WTC11 (cell line): ENCODE measurements at regions of chr3 and their contacts with region 1.

Region 1: DNA sequence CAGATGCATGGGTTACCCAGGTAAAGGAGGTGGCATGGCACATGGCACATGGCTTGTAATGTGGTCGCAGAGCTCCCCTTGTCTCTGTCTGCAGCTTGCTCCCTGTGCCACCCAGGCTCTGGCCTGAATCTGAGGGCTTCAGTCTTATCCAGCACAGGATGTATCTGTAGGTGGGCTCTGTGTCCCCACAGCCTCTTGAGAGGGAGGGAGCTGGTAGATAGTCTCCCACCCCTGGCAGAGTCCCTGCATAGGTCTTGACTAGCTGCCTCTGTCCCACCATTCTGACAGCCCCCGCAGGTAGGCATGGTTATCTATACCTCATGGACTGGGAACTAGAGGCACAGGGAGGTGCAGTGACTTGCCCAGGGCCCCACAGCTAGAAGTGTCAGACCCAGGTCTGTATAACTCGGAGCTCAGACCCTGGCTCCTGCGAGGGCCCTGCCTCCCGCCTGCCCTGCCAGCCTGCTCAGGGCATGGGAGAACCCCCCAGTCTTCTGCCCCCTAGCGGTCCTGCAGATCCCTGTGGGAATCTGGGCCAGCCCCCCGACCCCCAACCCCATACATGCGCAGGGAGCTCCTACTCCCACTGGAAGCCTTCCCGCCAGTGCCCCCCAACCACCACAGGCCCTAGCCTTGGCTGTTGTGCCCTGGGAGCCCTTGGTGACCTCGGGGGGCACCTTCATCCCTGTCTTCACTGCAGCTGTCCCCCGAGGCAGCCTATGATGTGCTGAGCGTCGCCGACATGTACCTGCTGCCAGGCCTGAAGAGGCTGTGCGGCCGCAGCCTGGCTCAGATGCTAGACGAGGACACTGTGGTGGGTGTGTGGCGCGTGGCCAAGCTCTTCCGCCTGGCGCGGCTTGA is 6.8 kb downstream of the ABTB1 start:
- DNase-seq: peak; percentile 69
- ATAC-seq: peak; percentile 73
- H3K4me3 Mint-ChIP-seq: no peak overlapping the region
- H3K27ac Mint-ChIP-seq: no peak overlapping the region
- H3K4me1 Mint-ChIP-seq: peaks cover 12% of the 10 kb centered on the region
- H3K27me3 Mint-ChIP-seq: no peaks in the 10 kb centered on the region; the same call in 1 of the 2 replicates
- CTCF ChIP-seq: peak; percentile 52; the same call in 1 of the 2 replicates

Region 2: GRCh38 chr3:127646501-127647046 is 32.9 kb before region 1 on chr3:
- CTCF ChIA-PET with region 1: interaction called, 25 read pairs
- POLR2A ChIA-PET with region 1: no interaction called
- DNase-seq: no peak
- ATAC-seq: no peak
- H3K4me3 Mint-ChIP-seq: no peak overlapping the region
- H3K27ac Mint-ChIP-seq: no peak overlapping the region
- H3K4me1 Mint-ChIP-seq: peaks cover 26% of the 10 kb centered on the region
- H3K27me3 Mint-ChIP-seq: no peaks in the 10 kb centered on the region
- CTCF ChIP-seq: no peak

Region 3: GRCh38 chr3:127690823-127691452 is 11.4 kb after region 1 on chr3:
- CTCF ChIA-PET with region 1: interaction called, 127 read pairs
- POLR2A ChIA-PET with region 1: no interaction called
- DNase-seq: peak; percentile 71
- ATAC-seq: peak; percentile 94
- H3K4me3 Mint-ChIP-seq: no peak overlapping the region
- H3K27ac Mint-ChIP-seq: no peak overlapping the region
- H3K4me1 Mint-ChIP-seq: peaks cover 19% of the 10 kb centered on the region
- H3K27me3 Mint-ChIP-seq: no peaks in the 10 kb centered on the region
- CTCF ChIP-seq: no peak

Region 4: GRCh38 chr3:127822698-127823425 is 143.3 kb after region 1 on chr3:
- CTCF ChIA-PET with region 1: interaction called, 16 read pairs
- POLR2A ChIA-PET with region 1: no interaction called
- DNase-seq: peak; percentile 28
- ATAC-seq: peak; percentile 46
- H3K4me3 Mint-ChIP-seq: peak overlapping the region; percentile 82
- H3K27ac Mint-ChIP-seq: no peak overlapping the region
- H3K4me1 Mint-ChIP-seq: peaks cover 29% of the 10 kb centered on the region
- H3K27me3 Mint-ChIP-seq: peaks cover 39% of the 10 kb centered on the region
- CTCF ChIP-seq: no peak

Region 5: GRCh38 chr3:127959846-127960245 is 280.3 kb after region 1 on chr3:
- CTCF ChIA-PET with region 1: interaction called, 22 read pairs
- POLR2A ChIA-PET with region 1: no interaction called
- DNase-seq: peak; percentile 48
- ATAC-seq: peak; percentile 94
- H3K4me3 Mint-ChIP-seq: no peak overlapping the region
- H3K27ac Mint-ChIP-seq: no peak overlapping the region
- H3K4me1 Mint-ChIP-seq: 0 out of 2 replicates have a peak, but pooled peaks cover 3% of the 10 kb centered on the region
- H3K27me3 Mint-ChIP-seq: no peaks in the 10 kb centered on the region
- CTCF ChIP-seq: no peak